B cell (primary cell): ENCODE measurements at regions of chr7 and their contacts with region 1.

Region 1: DNA sequence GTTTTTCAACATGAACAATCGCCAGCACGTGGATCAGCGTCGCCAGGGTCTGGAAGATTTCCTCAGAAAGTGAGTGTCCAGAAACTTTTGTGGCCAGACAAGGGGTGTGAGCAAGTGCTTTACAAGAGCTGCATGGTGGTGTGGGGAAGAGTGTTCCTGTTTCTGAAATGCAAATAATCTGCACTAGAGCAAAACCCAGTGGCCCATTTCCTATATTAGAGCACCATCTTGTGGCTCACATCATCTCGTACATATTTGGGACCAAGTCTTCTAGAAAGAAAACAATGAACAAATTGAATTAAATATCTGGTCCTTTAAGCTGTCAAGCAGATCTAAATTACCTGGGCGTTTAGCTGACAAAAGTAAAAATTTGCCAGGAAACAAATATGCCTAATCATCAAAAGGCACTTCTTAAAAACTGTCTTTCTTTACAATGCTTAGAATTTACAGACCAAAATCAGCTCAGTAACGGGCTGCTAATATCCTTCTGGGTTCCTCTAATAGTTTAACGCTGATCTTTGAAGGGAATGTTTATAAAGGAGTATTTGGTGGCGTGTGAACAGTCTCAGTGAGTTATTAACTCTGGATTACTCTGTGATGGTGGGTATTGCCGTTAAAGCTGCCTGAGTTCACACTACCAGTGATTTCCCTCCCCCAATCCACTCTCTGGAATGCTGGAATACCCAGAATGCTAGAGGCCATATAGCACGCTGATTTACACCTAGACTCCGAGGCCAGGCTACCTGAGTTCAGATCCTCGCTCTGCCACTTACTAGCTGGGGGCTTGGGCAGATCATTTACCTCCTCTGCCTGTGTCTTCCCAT is 73.6 kb downstream of the SNX10 start:
- DNase-seq: peak; percentile 89
- ATAC-seq: peak; percentile 95
- H3K4me3 ChIP-seq: no peak overlapping the region
- H3K4me3 Mint-ChIP-seq: no peak overlapping the region
- H3K27ac ChIP-seq: no peak overlapping the region
- H3K27ac Mint-ChIP-seq: peak overlapping the region; percentile 84
- H3K4me1 ChIP-seq: peaks cover 32 to 33% of the 10 kb centered on the region in 2 donors
- H3K4me1 Mint-ChIP-seq: peaks cover 34% of the 10 kb centered on the region
- H3K27me3 ChIP-seq: no peaks in the 10 kb centered on the region
- H3K27me3 Mint-ChIP-seq: no peaks in the 10 kb centered on the region
- CTCF ChIP-seq: peak; percentile 85

Region 2: GRCh38 chr7:26090927-26091519 is 274.3 kb before region 1 on chr7:
- CTCF ChIA-PET with region 1: interaction called, 77 read pairs
- POLR2A ChIA-PET with region 1: no interaction called
- intact Hi-C with region 1: loop called (anchors 1 kb)
- DNase-seq: peak; percentile 62
- ATAC-seq: peak; percentile 45
- H3K4me3 ChIP-seq: no peak overlapping the region
- H3K4me3 Mint-ChIP-seq: peak overlapping the region; percentile 32
- H3K27ac ChIP-seq: no peak overlapping the region
- H3K27ac Mint-ChIP-seq: peak overlapping the region; percentile 0
- H3K4me1 ChIP-seq: peaks cover 17 to 22% of the 10 kb centered on the region in 2 donors
- H3K4me1 Mint-ChIP-seq: peaks cover 26% of the 10 kb centered on the region
- H3K27me3 ChIP-seq: no peaks in the 10 kb centered on the region
- H3K27me3 Mint-ChIP-seq: no peaks in the 10 kb centered on the region
- CTCF ChIP-seq: peak; percentile 66

Region 3: GRCh38 chr7:26291699-26292538 is 73.4 kb before region 1 on chr7 and contains the start of gene SNX10:
- CTCF ChIA-PET with region 1: interaction called, 190 read pairs
- POLR2A ChIA-PET with region 1: interaction called, 4 read pairs
- intact Hi-C with region 1: loop called (anchors 1 kb)
- DNase-seq: peak; percentile 90
- ATAC-seq: peak; percentile 78
- H3K4me3 ChIP-seq: peak within 1 kb of the TSS; percentile 89 to 96 (median 90)
- H3K4me3 Mint-ChIP-seq: peak within 1 kb of the TSS; percentile 94
- H3K27ac ChIP-seq: peak within 1 kb of the TSS; percentile 60 to 82
- H3K27ac Mint-ChIP-seq: peak within 1 kb of the TSS; percentile 96
- H3K4me1 ChIP-seq: peaks cover 42 to 50% of the 10 kb centered on the region in 2 donors
- H3K4me1 Mint-ChIP-seq: peaks cover 45% of the 10 kb centered on the region
- H3K27me3 ChIP-seq: no peaks in the 10 kb centered on the region
- H3K27me3 Mint-ChIP-seq: no peaks in the 10 kb centered on the region
- CTCF ChIP-seq: peak; percentile 46
- total RNA-seq, gene SNX10: 26.5 and 33.6 TPM in 2 replicates

Region 4: GRCh38 chr7:26348234-26348851 is 16.9 kb before region 1 on chr7:
- CTCF ChIA-PET with region 1: interaction called, 19 read pairs
- POLR2A ChIA-PET with region 1: no interaction called
- intact Hi-C with region 1: no loop called
- DNase-seq: no peak
- ATAC-seq: no peak
- H3K4me3 ChIP-seq: no peak overlapping the region
- H3K4me3 Mint-ChIP-seq: no peak overlapping the region
- H3K27ac ChIP-seq: no peak overlapping the region
- H3K27ac Mint-ChIP-seq: peak overlapping the region; percentile 32
- H3K4me1 ChIP-seq: peaks cover 0 to 3% of the 10 kb centered on the region in 2 donors
- H3K4me1 Mint-ChIP-seq: peaks cover 37% of the 10 kb centered on the region
- H3K27me3 ChIP-seq: no peaks in the 10 kb centered on the region
- H3K27me3 Mint-ChIP-seq: no peaks in the 10 kb centered on the region
- CTCF ChIP-seq: no peak

Region 5: GRCh38 chr7:26398756-26399501 is 33.6 kb after region 1 on chr7:
- CTCF ChIA-PET with region 1: interaction called, 10 read pairs
- POLR2A ChIA-PET with region 1: interaction called, 3 read pairs
- intact Hi-C with region 1: no loop called
- DNase-seq: peak; percentile 95
- ATAC-seq: peak; percentile 86
- H3K4me3 ChIP-seq: peak overlapping the region in 4 of 5 experiments; percentile 50 to 70 (median 64)
- H3K4me3 Mint-ChIP-seq: peak overlapping the region; percentile 99
- H3K27ac ChIP-seq: peak overlapping the region; percentile 79 to 81
- H3K27ac Mint-ChIP-seq: peak overlapping the region; percentile 100
- H3K4me1 ChIP-seq: peaks cover 20 to 28% of the 10 kb centered on the region in 2 donors
- H3K4me1 Mint-ChIP-seq: peaks cover 32% of the 10 kb centered on the region
- H3K27me3 ChIP-seq: peaks cover 0 to 8% (median 0%) of the 10 kb centered on the region in 4 experiments
- H3K27me3 Mint-ChIP-seq: peaks cover 3% of the 10 kb centered on the region
- CTCF ChIP-seq: no peak

Region 6: GRCh38 chr7:26673271-26673670 is 308.0 kb after region 1 on chr7:
- CTCF ChIA-PET with region 1: interaction called, 165 read pairs
- POLR2A ChIA-PET with region 1: no interaction called
- intact Hi-C with region 1: no loop called
- DNase-seq: no peak
- ATAC-seq: no peak
- H3K4me3 ChIP-seq: no peak overlapping the region
- H3K4me3 Mint-ChIP-seq: no peak overlapping the region
- H3K27ac ChIP-seq: no peak overlapping the region
- H3K27ac Mint-ChIP-seq: no peak overlapping the region
- H3K4me1 ChIP-seq: peaks cover 0 to 8% of the 10 kb centered on the region in 2 donors
- H3K4me1 Mint-ChIP-seq: peaks cover 15% of the 10 kb centered on the region
- H3K27me3 ChIP-seq: no peaks in the 10 kb centered on the region
- H3K27me3 Mint-ChIP-seq: no peaks in the 10 kb centered on the region
- CTCF ChIP-seq: no peak